H1 (cell line): ENCODE measurements at regions of chr7 and their contacts with region 1.

Region 1: DNA sequence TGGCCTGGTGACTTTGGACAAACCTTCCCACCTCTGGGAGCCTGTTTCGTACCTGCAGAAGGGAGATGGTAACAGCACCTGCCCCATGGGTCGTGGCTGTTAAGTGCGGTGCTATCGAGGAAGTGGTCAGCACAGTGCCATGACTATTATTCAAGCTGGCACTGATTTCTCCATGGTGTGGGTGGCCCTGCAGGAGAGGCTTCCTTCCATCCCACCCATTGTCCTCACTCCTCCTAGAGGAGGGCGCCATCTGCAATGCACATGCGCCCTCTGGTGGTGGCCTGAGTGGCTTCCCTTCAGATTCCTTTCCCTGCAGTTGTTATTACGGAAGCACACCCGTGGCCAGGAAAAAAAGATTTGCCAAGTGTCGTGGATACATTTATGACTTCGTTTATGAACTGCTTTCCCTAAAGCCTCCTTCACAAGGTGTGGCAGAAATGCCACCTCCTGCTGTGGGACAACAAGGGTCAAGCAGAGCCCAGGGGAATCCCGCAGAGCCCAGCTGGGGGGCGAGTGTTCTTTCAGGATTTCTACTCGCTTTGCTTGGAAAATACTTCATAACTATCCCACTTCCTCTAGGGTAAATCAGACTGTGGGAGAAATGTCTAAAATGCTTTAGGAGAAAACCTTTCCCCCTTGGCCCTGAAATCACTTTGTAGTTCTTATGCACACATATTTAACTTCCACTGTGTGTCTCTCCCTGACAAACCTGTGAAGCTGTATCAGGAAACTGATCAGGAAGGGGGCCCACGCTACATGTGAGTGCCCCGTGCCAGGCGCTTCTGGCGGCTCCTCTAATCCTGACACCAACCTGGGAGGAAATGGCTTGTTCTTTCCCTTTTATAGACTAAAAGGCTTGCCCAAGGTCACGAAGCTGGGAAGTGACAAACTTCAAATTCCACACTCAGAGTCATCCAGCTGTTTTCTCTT is 98.0 kb upstream of the ANLN start:
- DNase-seq: peak in 1 of 2 experiments; percentile 89
- H3K4me3 ChIP-seq: no peak overlapping the region
- H3K27ac ChIP-seq: no peak overlapping the region
- H3K4me1 ChIP-seq: peaks cover 4 to 10% (median 6%) of the 10 kb centered on the region in 4 experiments; a peak in 5 of 7 replicates
- H3K27me3 ChIP-seq: no peaks in the 10 kb centered on the region
- CTCF ChIP-seq: peak; percentile 88 to 96 (median 95)
- EP300 ChIP-seq: no peak
- POLR2A ChIP-seq: no peak
- RAD21 ChIP-seq: peak; percentile 98 to 100

Region 2: DNA sequence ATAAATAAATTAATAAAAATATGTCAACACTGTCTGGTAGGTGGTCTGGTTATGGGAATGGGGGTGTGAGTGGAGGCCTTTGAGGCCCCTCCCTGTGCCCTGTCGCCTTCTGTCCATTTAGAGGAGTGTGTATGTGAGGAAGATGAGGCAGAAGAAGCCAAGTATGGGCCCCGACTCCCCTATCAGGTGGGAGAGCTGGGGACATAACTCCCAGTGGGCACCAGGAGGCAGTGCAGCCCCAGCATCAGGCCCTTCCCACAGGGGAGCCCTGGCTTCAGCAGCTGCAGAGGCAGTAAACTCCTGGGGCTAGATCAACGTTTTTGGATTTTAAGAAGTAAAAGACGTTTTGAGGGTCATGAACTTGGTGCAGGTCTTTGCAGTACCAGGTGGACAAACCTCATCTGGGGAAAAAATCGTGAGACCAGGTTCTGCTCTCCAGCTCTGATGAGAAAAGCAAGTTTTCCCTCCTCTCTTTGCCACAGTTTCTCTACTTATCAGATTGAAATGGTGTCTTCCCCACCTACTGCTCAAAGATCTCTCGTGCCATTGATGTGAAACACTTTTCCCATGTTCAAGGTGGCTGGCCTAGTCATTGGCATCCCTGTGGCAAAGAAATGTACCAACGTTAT is 306.4 kb before region 1 on chr7:
- CTCF ChIA-PET with region 1: interaction called, 59 read pairs
- POLR2A ChIA-PET with region 1: no interaction called
- DNase-seq: peak; percentile 54 to 80
- H3K4me3 ChIP-seq: no peak overlapping the region
- H3K27ac ChIP-seq: no peak overlapping the region
- H3K4me1 ChIP-seq: no peaks in the 10 kb centered on the region
- H3K27me3 ChIP-seq: no peaks in the 10 kb centered on the region
- CTCF ChIP-seq: peak; percentile 92 to 96 (median 94)
- EP300 ChIP-seq: no peak
- POLR2A ChIP-seq: no peak
- RAD21 ChIP-seq: peak; percentile 99

Region 3: DNA sequence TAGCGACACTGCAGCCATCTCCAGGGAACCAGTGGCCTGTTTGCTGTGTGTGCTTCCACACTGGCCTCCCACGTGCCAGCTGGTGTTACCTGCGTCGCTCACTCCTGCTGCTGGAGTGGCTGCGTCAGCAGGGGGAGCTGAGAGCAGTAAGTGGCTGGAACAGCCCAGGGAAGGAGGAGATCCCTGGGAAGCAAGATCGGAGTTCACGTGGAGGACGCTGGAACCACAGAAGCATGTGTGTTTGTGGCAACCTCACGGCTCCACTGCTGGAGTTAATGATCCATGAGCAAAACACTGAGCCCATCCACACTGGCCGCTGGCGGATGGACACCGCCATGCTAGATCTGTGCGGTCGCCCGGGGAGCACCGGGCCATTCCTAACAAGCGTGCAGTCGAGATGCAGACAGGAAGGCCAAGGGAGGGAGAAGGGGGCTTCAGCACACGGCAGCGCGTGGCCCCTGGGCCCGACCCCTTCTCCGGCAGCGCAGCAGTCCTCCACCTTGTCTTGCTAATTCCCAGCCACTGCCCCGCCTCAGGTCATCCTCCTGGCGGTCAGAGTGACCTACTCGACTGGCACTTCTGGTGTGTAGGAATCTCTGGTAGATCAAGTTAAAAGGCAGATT is 207.1 kb before region 1 on chr7:
- CTCF ChIA-PET with region 1: interaction called, 11 read pairs
- POLR2A ChIA-PET with region 1: no interaction called
- DNase-seq: peak; percentile 23 to 72
- H3K4me3 ChIP-seq: no peak overlapping the region
- H3K27ac ChIP-seq: no peak overlapping the region
- H3K4me1 ChIP-seq: peaks cover 0 to 5% (median 0%) of the 10 kb centered on the region in 4 experiments; a peak in 2 of 7 replicates
- H3K27me3 ChIP-seq: no peaks in the 10 kb centered on the region; a peak in 2 of 7 replicates
- CTCF ChIP-seq: peak; percentile 59 to 83 (median 71); a peak in 3 of 4 replicates
- EP300 ChIP-seq: peak in 1 of 2 experiments; percentile 92; a peak in 1 of 3 replicates
- POLR2A ChIP-seq: no peak
- RAD21 ChIP-seq: peak; percentile 60 to 74

Region 4: GRCh38 chr7:36280840-36281812 is 10.5 kb before region 1 on chr7:
- CTCF ChIA-PET with region 1: interaction called, 35 read pairs
- POLR2A ChIA-PET with region 1: interaction called, 4 read pairs
- DNase-seq: no peak
- H3K4me3 ChIP-seq: peak overlapping the region in 1 of 4 experiments; percentile 29; a peak in 2 of 8 replicates
- H3K27ac ChIP-seq: peak overlapping the region; percentile 77; the same call in 1 of the 2 replicates
- H3K4me1 ChIP-seq: peaks cover 27 to 63% (median 44%) of the 10 kb centered on the region in 4 experiments
- H3K27me3 ChIP-seq: no peaks in the 10 kb centered on the region
- CTCF ChIP-seq: no peak
- EP300 ChIP-seq: no peak
- POLR2A ChIP-seq: 0 out of 3 replicates have a peak, but pooled peaks of 1 of the 2 experiments have one; percentile 41
- RAD21 ChIP-seq: no peak

Region 5: DNA sequence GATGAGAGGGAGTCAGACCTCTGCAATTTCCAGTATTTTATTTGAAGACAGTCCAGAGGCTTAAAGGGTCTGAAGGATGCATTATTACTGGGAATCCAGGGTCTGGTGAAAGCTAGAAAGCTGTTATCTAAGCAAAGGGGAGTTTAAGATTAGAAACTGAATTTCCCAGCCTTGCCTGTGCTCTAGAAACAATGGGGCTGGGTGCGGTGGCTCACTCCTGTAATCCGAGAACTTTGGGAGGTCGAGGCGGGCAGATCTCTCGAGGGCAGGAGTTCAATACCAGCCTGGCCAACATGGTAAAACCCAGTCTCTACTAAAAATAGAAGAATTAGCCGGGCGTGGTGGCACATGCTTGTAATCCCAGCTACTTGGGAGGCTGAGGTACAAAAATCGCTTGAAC is 26.5 kb after region 1 on chr7:
- CTCF ChIA-PET with region 1: interaction called, 11 read pairs
- POLR2A ChIA-PET with region 1: no interaction called
- DNase-seq: no peak
- H3K4me3 ChIP-seq: no peak overlapping the region
- H3K27ac ChIP-seq: no peak overlapping the region
- H3K4me1 ChIP-seq: peaks cover 0 to 3% (median 0%) of the 10 kb centered on the region in 4 experiments; a peak in 3 of 7 replicates
- H3K27me3 ChIP-seq: no peaks in the 10 kb centered on the region
- CTCF ChIP-seq: no peak
- EP300 ChIP-seq: no peak
- POLR2A ChIP-seq: no peak
- RAD21 ChIP-seq: no peak